ENCODE measurements at regions of chrX and their contacts with region 1.

Region 1: DNA sequence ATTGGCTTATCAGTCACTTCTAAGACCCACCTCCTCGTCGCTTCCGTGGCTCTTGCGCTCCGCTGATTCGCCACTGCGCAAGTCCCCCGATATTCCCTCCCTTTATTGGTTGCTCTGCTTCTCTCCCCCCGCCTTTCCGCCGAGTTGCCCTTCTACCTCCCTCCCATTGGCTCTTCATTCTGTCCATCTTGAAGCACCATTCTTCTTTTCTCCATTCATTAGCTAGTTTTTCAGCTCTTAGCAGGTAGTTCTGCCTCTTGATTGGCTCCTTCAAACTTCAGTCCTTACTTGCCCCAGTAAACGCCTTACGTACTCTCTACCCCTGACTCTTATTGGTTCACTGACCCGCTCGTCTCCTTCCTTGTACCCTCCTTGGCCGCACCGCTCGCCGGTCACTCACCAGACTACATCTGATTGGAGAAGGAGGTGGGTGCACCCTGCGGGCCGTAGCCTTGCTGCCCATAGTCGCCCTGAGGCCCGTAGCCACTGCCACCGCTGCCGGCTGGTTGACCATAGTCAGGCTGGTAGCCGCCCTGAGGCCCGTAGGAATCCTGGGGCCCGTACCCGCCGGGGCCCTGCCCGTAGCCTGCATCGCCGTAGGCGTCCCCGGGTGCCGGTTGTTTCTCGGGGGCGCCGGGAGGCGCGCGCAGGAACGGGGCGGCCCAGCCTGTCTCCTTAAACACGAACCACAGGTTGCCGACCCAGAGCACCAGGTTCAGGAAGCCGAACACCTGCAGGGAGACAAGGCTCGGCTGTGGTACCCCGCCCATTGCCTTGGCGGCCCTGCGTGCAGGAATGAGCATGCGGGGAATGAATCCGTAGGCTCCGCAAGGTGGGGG is 5.1 kb upstream of the PRICKLE3 start:
- DNase-seq: peak; percentile 57
- ATAC-seq: peak; percentile 86
- H3K4me3 Mint-ChIP-seq: peak overlapping the region; percentile 92
- H3K27ac Mint-ChIP-seq: peak overlapping the region; percentile 96
- H3K4me1 Mint-ChIP-seq: peaks cover 29% of the 10 kb centered on the region
- H3K27me3 Mint-ChIP-seq: no peaks in the 10 kb centered on the region
- CTCF ChIP-seq: no peak

Region 2: DNA sequence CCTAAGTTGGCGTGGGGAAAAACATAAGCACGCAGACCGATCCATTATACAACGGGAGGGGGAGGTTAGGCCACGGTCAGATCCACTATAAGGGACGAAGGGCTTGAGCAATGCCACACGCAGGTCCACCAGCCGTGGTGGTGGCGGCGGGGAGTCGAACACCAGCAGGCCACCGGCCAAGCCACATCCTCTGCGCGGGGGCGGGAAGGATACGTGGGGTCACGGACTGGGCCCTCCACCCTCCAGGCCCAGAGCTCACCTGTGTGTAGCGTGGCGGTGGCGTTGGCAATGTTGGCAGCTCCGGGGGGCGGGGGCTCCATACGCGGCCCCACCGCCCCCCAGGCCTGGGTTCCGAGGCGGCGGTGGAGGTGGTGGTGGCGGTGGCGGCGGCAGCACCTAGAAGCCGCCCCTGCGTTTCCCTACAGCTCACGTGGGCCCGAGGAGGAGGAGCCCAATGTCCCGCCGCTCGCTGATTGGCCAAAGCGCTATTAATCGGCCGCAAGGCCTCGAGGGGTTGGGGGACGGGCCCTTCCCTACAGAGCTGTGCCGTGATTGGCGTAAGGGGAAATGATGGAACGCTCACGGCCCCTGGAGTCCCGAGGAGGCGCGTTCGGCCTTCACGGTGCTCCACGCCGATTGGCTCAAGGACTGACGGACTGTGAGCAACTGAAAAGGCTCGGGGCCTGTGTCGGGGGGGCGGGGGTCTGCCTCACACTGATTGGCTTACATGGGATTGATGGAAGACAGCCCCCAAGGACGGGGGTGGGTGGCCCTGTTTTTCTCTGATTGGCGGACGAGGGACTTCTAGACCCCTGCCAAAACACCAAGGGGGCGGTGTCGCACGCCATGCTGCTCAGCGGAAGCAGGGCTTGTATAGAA is 1540.8 kb before region 1 on chrX and contains the start of gene ELK1:
- CTCF ChIA-PET with region 1: no interaction called
- POLR2A ChIA-PET with region 1: no interaction called
- intact Hi-C with region 1: loop called (anchors 10 kb)
- DNase-seq: peak; percentile 76
- ATAC-seq: peak; percentile 92
- H3K4me3 Mint-ChIP-seq: peak within 1 kb of the TSS; percentile 88
- H3K27ac Mint-ChIP-seq: peak within 1 kb of the TSS; percentile 87
- H3K4me1 Mint-ChIP-seq: peaks cover 29% of the 10 kb centered on the region
- H3K27me3 Mint-ChIP-seq: no peaks in the 10 kb centered on the region
- CTCF ChIP-seq: no peak
- total RNA-seq, gene ELK1: 26.5 and 31.8 TPM in 2 replicates

Region 3: GRCh38 chrX:49002091-49002935 is 188.9 kb before region 1 on chrX and contains the start of gene GRIPAP1:
- CTCF ChIA-PET with region 1: no interaction called
- POLR2A ChIA-PET with region 1: interaction called, 12 read pairs
- intact Hi-C with region 1: no loop called
- DNase-seq: peak; percentile 52
- ATAC-seq: peak; percentile 88
- H3K4me3 Mint-ChIP-seq: peak within 1 kb of the TSS; percentile 99
- H3K27ac Mint-ChIP-seq: peak within 1 kb of the TSS; percentile 97
- H3K4me1 Mint-ChIP-seq: peaks cover 24% of the 10 kb centered on the region
- H3K27me3 Mint-ChIP-seq: no peaks in the 10 kb centered on the region
- CTCF ChIP-seq: no peak
- total RNA-seq, gene GRIPAP1: 97.3 and 117 TPM in 2 replicates

Region 4: DNA sequence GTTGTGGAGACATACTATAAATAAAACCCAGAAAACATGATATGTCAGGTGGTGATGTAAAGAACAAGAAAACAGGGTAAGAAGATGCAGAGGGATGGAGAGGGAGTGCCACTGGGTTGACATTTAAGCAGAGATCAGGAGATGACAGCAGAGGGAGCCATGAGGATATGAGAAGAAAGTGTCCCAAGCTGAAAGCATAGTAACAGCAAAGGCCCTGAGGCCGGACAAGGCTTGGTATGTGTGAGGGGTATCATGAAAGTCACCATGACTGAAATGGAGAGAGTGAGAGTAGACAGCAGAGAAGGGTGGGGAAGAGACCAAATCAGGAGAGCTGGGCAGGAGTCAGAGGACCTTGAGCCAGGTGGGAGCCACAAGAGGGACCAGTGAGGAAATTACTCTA is 71.2 kb before region 1 on chrX:
- CTCF ChIA-PET with region 1: interaction called, 3 read pairs
- POLR2A ChIA-PET with region 1: interaction called, 3 read pairs
- intact Hi-C with region 1: loop called (anchors 1 kb)
- DNase-seq: no peak
- ATAC-seq: no peak
- H3K4me3 Mint-ChIP-seq: no peak overlapping the region
- H3K27ac Mint-ChIP-seq: no peak overlapping the region
- H3K4me1 Mint-ChIP-seq: peaks cover 27% of the 10 kb centered on the region
- H3K27me3 Mint-ChIP-seq: no peaks in the 10 kb centered on the region
- CTCF ChIP-seq: no peak

Region 5: GRCh38 chrX:49163555-49164419 is 27.5 kb before region 1 on chrX:
- CTCF ChIA-PET with region 1: interaction called, 10 read pairs
- POLR2A ChIA-PET with region 1: interaction called, 48 read pairs
- intact Hi-C with region 1: loop called (anchors 1 kb)
- DNase-seq: peak; percentile 79
- ATAC-seq: peak; percentile 60
- H3K4me3 Mint-ChIP-seq: peak overlapping the region; percentile 83
- H3K27ac Mint-ChIP-seq: peak overlapping the region; percentile 92
- H3K4me1 Mint-ChIP-seq: peaks cover 31% of the 10 kb centered on the region
- H3K27me3 Mint-ChIP-seq: no peaks in the 10 kb centered on the region
- CTCF ChIP-seq: no peak

Region 6: DNA sequence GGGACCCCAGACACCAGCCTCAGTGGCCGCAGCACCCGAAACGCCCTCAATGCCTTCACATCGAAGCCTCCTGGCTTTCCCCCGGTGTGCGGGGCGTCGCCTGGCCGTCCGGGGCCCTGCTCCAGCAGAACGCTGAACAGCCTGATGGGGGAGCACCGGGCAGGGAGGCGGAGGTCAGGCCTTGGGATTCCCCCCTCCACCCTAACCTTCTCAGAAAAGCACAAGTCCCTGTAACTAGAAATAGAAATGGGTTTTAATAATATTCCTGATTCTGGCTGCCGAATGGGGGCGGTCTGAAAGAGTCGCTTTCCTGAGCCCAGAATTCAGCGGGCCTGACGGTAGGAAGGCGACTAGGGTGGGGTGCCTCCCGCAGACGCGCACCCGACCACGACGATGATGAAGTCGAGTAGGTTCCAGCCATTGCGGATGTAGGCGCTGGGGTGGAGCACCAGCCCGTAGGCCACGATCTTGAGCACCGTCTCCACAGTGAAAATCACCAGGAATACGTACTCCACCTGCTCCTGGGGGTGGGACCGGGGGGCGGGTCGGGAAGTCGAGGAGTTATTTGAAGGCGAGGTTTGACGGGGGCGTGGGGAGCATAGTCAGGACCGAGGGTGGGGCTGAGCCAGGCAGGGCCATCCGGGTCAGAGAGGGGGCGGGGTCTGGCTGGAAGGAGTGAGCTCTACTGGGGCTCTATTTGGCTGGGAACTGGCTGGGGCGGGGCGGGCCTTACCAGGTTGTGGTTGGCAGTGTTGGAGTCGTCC is 39.4 kb after region 1 on chrX:
- CTCF ChIA-PET with region 1: no interaction called
- POLR2A ChIA-PET with region 1: interaction called, 8 read pairs
- intact Hi-C with region 1: loop called (anchors 2 kb)
- DNase-seq: peak; percentile 54
- ATAC-seq: peak; percentile 78
- H3K4me3 Mint-ChIP-seq: peak overlapping the region; percentile 85
- H3K27ac Mint-ChIP-seq: peak overlapping the region; percentile 95
- H3K4me1 Mint-ChIP-seq: peaks cover 18% of the 10 kb centered on the region
- H3K27me3 Mint-ChIP-seq: no peaks in the 10 kb centered on the region
- CTCF ChIP-seq: no peak

Region 7: DNA sequence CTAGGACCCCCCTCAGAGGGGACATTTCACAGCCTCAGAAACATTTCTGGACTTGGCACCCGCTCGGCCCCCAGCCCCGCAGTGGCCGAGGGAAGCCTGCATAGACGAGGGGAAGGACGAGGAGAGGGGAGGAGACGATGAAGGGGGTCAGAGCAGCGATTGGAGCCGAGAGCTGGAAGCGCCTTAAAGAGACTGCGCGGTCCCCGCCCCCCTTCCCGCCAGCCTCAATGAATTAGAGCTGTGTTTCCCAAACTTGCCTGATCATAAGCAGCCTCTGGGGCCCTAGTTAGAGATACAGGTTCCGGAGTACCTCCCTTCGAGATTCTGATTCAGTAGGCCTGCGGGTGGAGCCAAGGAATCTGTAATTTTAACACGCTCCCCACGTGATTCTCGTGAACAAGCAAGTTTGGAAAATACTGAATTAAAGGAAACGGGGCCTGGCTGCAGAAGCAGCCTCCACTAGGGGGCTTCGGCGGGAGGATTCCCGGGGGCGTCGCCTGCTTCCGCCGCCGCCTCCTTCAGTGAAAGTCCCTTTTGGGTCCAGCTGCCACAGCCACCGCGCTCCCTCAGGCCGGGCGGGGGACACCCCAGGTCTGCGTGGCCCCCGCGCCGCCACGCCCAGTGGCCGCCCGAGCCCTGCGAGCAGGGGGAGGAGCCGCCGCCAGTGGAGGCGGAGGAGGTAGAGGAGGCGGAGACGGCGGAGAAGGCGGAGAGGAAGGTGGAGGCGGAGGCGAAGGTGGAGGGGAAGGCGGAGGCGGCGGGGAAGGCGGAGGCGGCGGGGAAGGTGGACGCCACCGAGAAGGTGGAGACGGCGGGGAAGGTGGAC is 687.8 kb after region 1 on chrX and contains the start of gene USP27X:
- CTCF ChIA-PET with region 1: no interaction called
- POLR2A ChIA-PET with region 1: no interaction called
- intact Hi-C with region 1: loop called (anchors 5 kb)
- DNase-seq: peak; percentile 72
- ATAC-seq: peak; percentile 94
- H3K4me3 Mint-ChIP-seq: peak within 1 kb of the TSS; percentile 81
- H3K27ac Mint-ChIP-seq: peak within 1 kb of the TSS; percentile 78
- H3K4me1 Mint-ChIP-seq: peaks cover 30% of the 10 kb centered on the region
- H3K27me3 Mint-ChIP-seq: no peaks in the 10 kb centered on the region
- CTCF ChIP-seq: no peak
- total RNA-seq, gene USP27X: 2.3 and 2.8 TPM in 2 replicates

Measured in activated B cell treated with CpG ODN at 0.5 μM for 24 hours (primary cell).